AG04449 (cell line): ENCODE measurements at regions of chr14 and their contacts with region 1.

Region 1: GRCh38 chr14:102437997-102438915 is 71.3 kb downstream of the ANKRD9 start:
- DNase-seq: no peak
- H3K4me3 ChIP-seq: peak overlapping the region; percentile 32; the same call in 1 of the 2 replicates
- CTCF ChIP-seq: peak; percentile 89

Region 2: DNA sequence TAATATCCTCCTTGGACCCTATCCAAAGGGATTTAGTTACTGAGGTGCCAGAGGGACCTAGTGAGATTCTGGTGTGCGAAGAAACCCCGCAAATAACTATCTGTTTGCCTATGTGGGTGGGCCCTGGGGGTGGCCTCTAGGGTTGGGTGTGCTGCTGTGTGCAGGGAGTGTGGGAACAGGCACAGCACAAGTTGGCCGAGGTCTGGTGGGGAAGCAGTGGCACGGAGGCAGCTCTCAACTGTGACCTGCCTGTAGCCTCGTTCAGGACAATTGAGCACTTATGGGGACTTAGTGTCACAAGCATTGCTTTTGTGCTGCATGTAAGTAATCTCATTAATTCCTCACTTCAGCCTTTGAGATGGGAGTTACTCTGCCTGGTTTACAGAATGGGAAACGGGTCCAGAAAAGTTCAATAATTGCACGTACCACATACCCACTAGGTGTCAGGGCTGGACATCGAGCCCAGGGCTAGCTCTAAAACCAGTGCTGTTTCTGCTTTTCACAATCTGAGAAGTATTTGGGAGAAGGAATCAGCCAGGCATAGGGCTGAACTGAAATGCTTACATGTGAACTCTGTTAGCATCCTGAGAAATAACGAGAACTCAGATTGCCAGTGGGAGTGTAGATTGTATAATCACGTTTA is 16.7 kb before region 1 on chr14:
- CTCF ChIA-PET with region 1: interaction called, 47 read pairs
- POLR2A ChIA-PET with region 1: no interaction called
- DNase-seq: no peak
- H3K4me3 ChIP-seq: no peak overlapping the region
- CTCF ChIP-seq: no peak

Region 3: GRCh38 chr14:102474934-102475333 is 36.7 kb after region 1 on chr14:
- CTCF ChIA-PET with region 1: interaction called, 25 read pairs
- POLR2A ChIA-PET with region 1: no interaction called
- DNase-seq: no peak
- H3K4me3 ChIP-seq: no peak overlapping the region
- CTCF ChIP-seq: no peak

Region 4: GRCh38 chr14:102509744-102510615 is 71.7 kb after region 1 on chr14 and contains the start of gene ANKRD9:
- CTCF ChIA-PET with region 1: interaction called, 77 read pairs
- POLR2A ChIA-PET with region 1: no interaction called
- DNase-seq: peak; percentile 23
- H3K4me3 ChIP-seq: peak within 1 kb of the TSS; percentile 64
- CTCF ChIP-seq: no peak

Region 5: GRCh38 chr14:102524466-102525218 is 86.4 kb after region 1 on chr14:
- CTCF ChIA-PET with region 1: interaction called, 60 read pairs
- POLR2A ChIA-PET with region 1: interaction called, 3 read pairs
- DNase-seq: peak; percentile 78
- H3K4me3 ChIP-seq: peak overlapping the region; percentile 73
- CTCF ChIP-seq: peak; percentile 99

Region 6: GRCh38 chr14:102591889-102592763 is 153.9 kb after region 1 on chr14 and contains the start of gene RCOR1:
- CTCF ChIA-PET with region 1: interaction called, 10 read pairs
- POLR2A ChIA-PET with region 1: no interaction called
- DNase-seq: peak; percentile 91
- H3K4me3 ChIP-seq: peak within 1 kb of the TSS; percentile 79
- CTCF ChIP-seq: no peak